Endothelial cell of umbilical vein (primary cell): ENCODE measurements at regions of chr6 and their contacts with region 1.

Region 1: DNA sequence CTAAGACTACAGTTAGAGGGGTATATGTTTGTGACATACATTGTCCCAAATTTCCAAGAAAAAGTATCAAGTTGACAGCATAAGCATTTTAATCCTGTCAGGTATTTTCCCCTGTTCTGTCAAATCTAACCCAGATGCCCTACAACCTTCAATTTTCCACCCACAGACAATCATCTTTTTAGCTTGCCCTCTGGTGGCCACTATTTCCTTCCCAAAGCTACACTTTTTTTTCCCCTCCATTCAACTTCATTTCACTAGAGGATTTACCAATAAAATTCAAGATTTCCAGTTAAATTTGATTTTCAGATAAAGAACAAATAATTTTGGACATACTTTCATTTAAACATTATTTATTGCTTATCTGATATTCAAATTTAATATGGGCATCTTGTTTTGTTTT is 286.6 kb downstream of the TENT5A start:
- DNase-seq: peak; percentile 19
- H3K4me3 ChIP-seq: no peak overlapping the region
- H3K27ac ChIP-seq: no peak overlapping the region
- H3K4me1 ChIP-seq: no peaks in the 10 kb centered on the region
- H3K27me3 ChIP-seq: no peaks in the 10 kb centered on the region
- CTCF ChIP-seq: peak; percentile 28 to 38
- POLR2A ChIP-seq: no peak

Region 2: GRCh38 chr6:80133020-80133419 is 1332.8 kb before region 1 on chr6:
- CTCF ChIA-PET with region 1: no interaction called
- POLR2A ChIA-PET with region 1: no interaction called
- dilution Hi-C with region 1: no loop called
- intact Hi-C with region 1: loop called (anchors 5 kb)
- DNase-seq: peak; percentile 58
- H3K4me3 ChIP-seq: no peak overlapping the region
- H3K27ac ChIP-seq: no peak overlapping the region
- H3K4me1 ChIP-seq: peaks cover 7% of the 10 kb centered on the region
- H3K27me3 ChIP-seq: no peaks in the 10 kb centered on the region
- CTCF ChIP-seq: peak; percentile 39 to 45
- POLR2A ChIP-seq: no peak

Region 3: DNA sequence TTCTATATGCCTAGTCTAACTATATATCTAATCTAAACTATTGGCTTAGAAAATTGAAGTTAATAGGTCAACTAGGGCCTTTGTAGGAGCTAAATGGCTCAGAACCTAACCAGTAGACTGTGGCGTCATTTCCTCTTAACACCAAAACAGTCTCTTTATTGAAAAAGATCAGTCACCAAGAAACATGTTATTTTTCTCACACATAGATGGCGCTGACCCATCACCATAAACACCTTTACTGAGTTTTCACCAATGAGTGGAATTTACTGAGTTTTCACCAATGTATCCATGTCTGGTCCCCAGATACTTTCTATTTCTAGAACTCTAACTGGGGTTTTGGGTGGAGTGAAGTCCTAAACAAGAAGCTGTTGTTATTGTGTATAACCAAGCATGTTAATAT is 723.4 kb before region 1 on chr6:
- CTCF ChIA-PET with region 1: no interaction called
- POLR2A ChIA-PET with region 1: no interaction called
- dilution Hi-C with region 1: no loop called
- intact Hi-C with region 1: loop called (anchors 1 kb)
- DNase-seq: peak; percentile 33
- H3K4me3 ChIP-seq: no peak overlapping the region
- H3K27ac ChIP-seq: no peak overlapping the region
- H3K4me1 ChIP-seq: no peaks in the 10 kb centered on the region
- H3K27me3 ChIP-seq: no peaks in the 10 kb centered on the region
- CTCF ChIP-seq: peak; percentile 31
- POLR2A ChIP-seq: no peak

Region 4: GRCh38 chr6:81241126-81242041 is 224.5 kb before region 1 on chr6:
- CTCF ChIA-PET with region 1: interaction called, 6 read pairs
- POLR2A ChIA-PET with region 1: no interaction called
- dilution Hi-C with region 1: no loop called
- intact Hi-C with region 1: loop called (anchors 5 kb)
- DNase-seq: peak; percentile 23
- H3K4me3 ChIP-seq: no peak overlapping the region
- H3K27ac ChIP-seq: no peak overlapping the region
- H3K4me1 ChIP-seq: no peaks in the 10 kb centered on the region
- H3K27me3 ChIP-seq: no peaks in the 10 kb centered on the region
- CTCF ChIP-seq: peak; percentile 24 to 29
- POLR2A ChIP-seq: no peak

Region 5: DNA sequence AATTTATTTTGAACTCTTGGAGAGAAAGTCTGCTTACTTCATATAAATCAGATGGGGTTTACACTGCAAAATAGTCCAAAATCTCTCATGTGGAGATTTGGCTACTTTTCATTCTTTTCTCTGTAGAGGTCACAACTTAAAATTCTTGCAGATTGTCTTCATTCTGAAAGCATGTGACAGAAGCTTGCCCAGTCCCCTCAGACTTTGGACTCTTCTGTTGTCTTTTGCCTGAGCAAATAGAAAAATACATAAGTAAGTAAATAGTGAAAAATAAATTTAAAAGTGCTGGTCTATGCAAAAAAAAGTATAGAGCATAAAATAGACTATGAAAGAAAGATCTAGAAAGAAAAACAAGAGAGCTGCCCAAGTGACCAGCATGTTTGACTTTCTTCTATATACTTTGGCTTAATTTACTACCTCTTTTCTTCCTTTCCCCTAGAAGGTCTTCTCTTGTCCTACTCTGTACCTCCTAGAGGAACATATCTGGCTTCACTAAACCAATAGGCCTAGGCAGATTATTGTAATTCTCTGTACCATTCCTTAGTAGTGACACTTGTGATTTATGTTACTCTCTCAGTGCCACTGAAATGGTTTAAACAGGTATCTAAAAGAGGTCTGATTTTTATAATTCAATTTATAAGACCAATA is 25.7 kb after region 1 on chr6:
- CTCF ChIA-PET with region 1: no interaction called
- POLR2A ChIA-PET with region 1: no interaction called
- dilution Hi-C with region 1: no loop called
- intact Hi-C with region 1: no loop called
- DNase-seq: no peak
- H3K4me3 ChIP-seq: no peak overlapping the region
- H3K27ac ChIP-seq: no peak overlapping the region
- H3K4me1 ChIP-seq: no peaks in the 10 kb centered on the region
- H3K27me3 ChIP-seq: no peaks in the 10 kb centered on the region
- CTCF ChIP-seq: no peak
- POLR2A ChIP-seq: no peak

Region 6: DNA sequence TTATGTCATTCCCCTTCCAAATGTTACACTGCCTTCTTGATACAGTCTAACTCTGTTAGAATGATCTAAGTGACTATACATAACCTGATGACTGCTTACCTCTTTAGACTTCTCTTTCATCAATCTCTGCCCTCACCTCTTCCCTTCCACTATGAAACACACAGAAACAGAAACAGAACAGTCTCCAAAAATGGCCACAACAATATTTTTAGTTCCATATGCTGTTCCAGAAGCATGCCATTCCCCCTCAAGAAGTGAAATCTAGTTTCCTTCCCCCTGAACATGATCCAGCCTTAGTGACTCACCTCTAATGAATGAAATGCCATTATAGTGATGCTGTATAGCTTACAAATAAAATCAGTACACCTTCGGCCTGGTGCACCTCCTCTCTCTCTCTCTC is 516.0 kb after region 1 on chr6:
- CTCF ChIA-PET with region 1: no interaction called
- POLR2A ChIA-PET with region 1: no interaction called
- dilution Hi-C with region 1: no loop called
- intact Hi-C with region 1: loop called (anchors 5 kb)
- DNase-seq: peak; percentile 68
- H3K4me3 ChIP-seq: no peak overlapping the region
- H3K27ac ChIP-seq: peak overlapping the region; percentile 66
- H3K4me1 ChIP-seq: peaks cover 15% of the 10 kb centered on the region
- H3K27me3 ChIP-seq: no peaks in the 10 kb centered on the region
- CTCF ChIP-seq: no peak
- POLR2A ChIP-seq: no peak

Region 7: DNA sequence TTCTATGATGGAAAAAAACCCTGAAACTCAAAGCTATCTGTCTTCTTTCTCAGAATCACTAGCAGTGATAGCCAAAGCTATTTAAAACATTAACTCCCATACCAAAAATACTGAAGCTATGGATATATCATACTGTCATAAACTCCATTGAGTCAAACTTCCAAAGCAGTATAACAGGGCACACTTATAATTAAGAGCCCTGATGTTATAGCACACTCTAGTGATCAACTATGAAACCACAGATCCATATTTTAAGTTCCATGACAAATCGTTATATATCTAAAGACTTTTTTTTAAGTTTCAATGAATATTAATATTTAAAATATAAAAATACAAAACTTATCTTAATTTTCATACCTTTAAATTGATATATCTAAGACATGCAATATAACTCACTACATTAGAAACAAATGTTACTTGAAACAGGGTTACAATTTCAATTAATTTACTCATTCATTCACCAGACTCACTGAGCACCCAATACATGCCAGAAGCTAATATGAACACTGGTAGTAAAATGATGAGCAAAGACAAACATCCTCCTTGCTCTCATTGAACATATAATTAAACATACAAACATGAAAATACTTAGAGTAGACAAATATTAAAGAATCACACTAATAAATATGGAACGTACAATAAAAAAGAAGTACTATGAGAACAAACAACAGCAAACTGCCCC is 712.4 kb after region 1 on chr6:
- CTCF ChIA-PET with region 1: no interaction called
- POLR2A ChIA-PET with region 1: no interaction called
- dilution Hi-C with region 1: no loop called
- intact Hi-C with region 1: loop called (anchors 5 kb)
- DNase-seq: peak; percentile 56
- H3K4me3 ChIP-seq: no peak overlapping the region
- H3K27ac ChIP-seq: no peak overlapping the region
- H3K4me1 ChIP-seq: no peaks in the 10 kb centered on the region
- H3K27me3 ChIP-seq: no peaks in the 10 kb centered on the region
- CTCF ChIP-seq: peak; percentile 19 to 26
- POLR2A ChIP-seq: no peak